ENCODE measurements at regions of chr14 and their contacts with region 1.

Region 1: DNA sequence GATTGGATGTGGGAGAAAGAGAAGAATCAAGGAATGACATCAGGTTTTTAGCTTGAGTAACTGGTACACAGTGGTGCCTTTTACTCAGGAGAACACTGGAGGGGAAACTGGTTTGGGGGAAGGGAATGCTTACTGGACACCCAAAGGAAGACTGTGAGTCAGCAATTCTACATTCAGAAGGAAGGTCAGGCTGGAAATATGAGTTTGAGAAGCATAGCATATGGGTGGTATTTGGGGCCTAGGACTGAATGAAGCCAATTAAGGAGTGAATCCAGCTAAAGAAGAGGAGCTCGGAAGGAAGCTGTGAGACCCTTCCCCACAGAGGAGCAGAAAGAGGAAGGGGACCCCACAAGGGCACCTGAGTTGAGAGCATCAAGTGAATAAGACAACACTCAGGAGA is 35.4 kb downstream of the DMAC2L start:
- DNase-seq: no peak
- H3K4me3 ChIP-seq: no peak overlapping the region
- H3K27ac ChIP-seq: peak overlapping the region in 55 of 59 donors; percentile 14 to 92 (median 73)
- H3K27me3 ChIP-seq: no peaks in the 10 kb centered on the region
- CTCF ChIP-seq: no peak

Region 2: GRCh38 chr14:50389668-50390441 is 42.3 kb after region 1 on chr14:
- intact Hi-C with region 1: loop called (anchors 5 kb)
- DNase-seq: no peak
- H3K4me3 ChIP-seq: no peak overlapping the region
- H3K27ac ChIP-seq: no peak overlapping the region
- H3K27me3 ChIP-seq: no peaks in the 10 kb centered on the region
- CTCF ChIP-seq: no peak